ENCODE measurements at regions of chr17 and their contacts with region 1.

Region 1: GRCh38 chr17:77666881-77667395 is 291.6 kb upstream of the TNRC6C start:
- DNase-seq: peak; percentile 89
- H3K4me3 Mint-ChIP-seq: peak overlapping the region; percentile 83
- H3K27ac Mint-ChIP-seq: peak overlapping the region; percentile 97
- H3K4me1 Mint-ChIP-seq: peaks cover 41% of the 10 kb centered on the region
- H3K27me3 Mint-ChIP-seq: no peaks in the 10 kb centered on the region

Region 2: GRCh38 chr17:77609553-77610517 is 57.1 kb before region 1 on chr17:
- CTCF ChIA-PET with region 1: interaction called, 6 read pairs
- POLR2A ChIA-PET with region 1: no interaction called
- intact Hi-C with region 1: loop called (anchors 1 kb)
- DNase-seq: peak; percentile 79
- H3K4me3 Mint-ChIP-seq: peak overlapping the region; percentile 51
- H3K27ac Mint-ChIP-seq: peak overlapping the region; percentile 29
- H3K4me1 Mint-ChIP-seq: peaks cover 25% of the 10 kb centered on the region
- H3K27me3 Mint-ChIP-seq: no peaks in the 10 kb centered on the region

Region 3: DNA sequence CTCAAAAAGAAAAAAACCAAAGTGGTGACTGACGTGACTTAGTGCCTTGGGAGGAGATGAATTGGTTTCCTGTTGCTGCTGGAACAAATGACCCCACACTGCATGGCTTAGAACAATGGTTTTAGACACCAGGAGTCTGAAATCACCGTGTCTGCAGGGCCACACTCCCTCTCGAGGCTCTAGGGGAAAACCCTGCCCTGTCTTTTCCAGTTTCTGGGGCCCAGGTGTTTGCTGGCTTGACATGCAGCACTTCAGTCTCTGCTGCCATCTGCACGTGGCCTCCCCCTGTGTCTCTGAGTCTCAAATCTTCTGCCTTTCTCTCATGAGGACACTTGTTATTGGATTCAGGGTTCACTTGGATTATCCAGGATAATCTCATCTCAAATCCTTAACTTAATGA is 32.2 kb before region 1 on chr17:
- CTCF ChIA-PET with region 1: no interaction called
- POLR2A ChIA-PET with region 1: interaction called, 3 read pairs
- intact Hi-C with region 1: loop called (anchors 5 kb)
- DNase-seq: peak; percentile 79
- H3K4me3 Mint-ChIP-seq: no peak overlapping the region
- H3K27ac Mint-ChIP-seq: peak overlapping the region; percentile 46
- H3K4me1 Mint-ChIP-seq: peaks cover 17% of the 10 kb centered on the region
- H3K27me3 Mint-ChIP-seq: peaks cover 5% of the 10 kb centered on the region

Region 4: DNA sequence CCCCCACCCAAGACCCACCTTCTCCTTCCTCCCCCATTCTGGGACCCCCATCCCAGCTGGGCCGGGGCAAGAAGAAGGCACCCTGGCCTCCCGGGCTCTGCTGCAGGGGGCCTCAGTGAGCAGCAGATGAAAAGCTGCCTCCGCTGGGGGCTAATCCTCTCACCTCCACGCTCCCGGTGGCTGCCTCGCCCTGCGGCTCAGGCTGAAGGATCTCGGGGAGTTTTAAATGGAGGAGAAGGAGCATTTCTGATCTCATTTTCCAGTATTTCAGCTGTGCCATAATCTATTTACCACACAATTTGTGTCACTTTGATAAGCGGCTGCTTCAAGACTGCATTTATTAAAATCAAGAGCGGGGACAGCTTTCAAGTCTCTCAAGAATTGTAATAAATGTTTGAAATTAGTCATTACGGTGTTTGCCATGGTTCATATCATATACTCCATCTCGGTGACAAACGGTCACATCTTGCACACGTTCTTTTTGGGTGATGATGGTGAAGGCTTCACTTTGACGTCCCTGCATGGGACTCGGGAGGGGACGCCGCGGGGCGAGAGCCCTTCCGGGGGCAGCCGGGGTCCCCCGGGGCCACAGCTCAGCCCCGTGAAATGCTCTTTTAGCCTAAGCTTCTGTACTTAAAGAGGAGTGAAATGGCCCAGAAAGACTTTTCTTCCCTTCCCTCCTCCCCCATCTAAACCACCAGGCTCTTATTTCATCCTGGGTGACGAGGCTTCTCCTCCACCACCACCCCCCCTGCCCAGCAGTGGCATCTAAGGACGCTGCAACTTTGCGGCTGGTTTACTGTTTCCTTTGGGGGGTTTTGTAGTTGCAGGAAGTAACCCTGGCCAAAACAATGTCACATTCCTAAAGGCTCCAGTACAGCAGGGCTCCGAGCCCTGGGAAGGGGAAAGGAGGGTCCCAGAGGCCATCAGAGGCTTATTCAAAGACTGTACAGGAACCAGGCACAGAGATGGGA is 21.6 kb before region 1 on chr17:
- CTCF ChIA-PET with region 1: interaction called, 16 read pairs
- POLR2A ChIA-PET with region 1: interaction called, 16 read pairs
- intact Hi-C with region 1: loop called (anchors 1 kb)
- DNase-seq: peak; percentile 85
- H3K4me3 Mint-ChIP-seq: peak overlapping the region; percentile 68
- H3K27ac Mint-ChIP-seq: peak overlapping the region; percentile 84
- H3K4me1 Mint-ChIP-seq: peaks cover 26% of the 10 kb centered on the region
- H3K27me3 Mint-ChIP-seq: no peaks in the 10 kb centered on the region

Region 5: DNA sequence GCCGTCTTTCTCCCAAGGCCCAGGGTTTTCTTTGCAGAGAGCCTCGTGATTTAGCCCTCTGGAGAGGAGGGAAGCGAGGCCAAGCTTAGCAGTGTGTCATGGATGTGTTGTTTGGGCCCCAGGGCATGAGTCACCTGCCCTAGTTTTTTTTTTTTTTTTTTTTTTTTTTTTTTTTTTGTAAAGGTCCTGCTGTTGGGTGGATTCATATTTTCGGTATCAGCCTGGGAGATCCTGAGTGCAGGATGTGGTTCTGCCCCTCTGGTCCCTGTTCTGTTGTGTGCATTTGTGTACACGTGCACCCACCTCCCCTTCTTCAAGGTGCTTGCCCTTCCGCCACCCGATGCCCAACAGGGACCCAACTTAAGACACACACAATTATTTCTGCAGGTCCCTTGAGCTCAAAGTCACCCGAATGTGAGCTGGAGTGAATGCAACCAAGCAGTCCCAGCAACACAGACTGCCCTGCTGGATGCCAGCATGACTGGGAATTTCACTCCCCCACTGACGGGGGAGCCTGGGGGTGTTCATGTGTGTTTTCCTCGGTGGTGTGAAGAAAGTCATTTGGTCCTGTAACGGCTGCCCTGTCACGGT is 25.7 kb after region 1 on chr17:
- CTCF ChIA-PET with region 1: no interaction called
- POLR2A ChIA-PET with region 1: no interaction called
- intact Hi-C with region 1: loop called (anchors 1 kb)
- DNase-seq: peak; percentile 45
- H3K4me3 Mint-ChIP-seq: peak overlapping the region; percentile 26
- H3K27ac Mint-ChIP-seq: no peak overlapping the region
- H3K4me1 Mint-ChIP-seq: peaks cover 35% of the 10 kb centered on the region
- H3K27me3 Mint-ChIP-seq: peaks cover 13% of the 10 kb centered on the region

Region 6: DNA sequence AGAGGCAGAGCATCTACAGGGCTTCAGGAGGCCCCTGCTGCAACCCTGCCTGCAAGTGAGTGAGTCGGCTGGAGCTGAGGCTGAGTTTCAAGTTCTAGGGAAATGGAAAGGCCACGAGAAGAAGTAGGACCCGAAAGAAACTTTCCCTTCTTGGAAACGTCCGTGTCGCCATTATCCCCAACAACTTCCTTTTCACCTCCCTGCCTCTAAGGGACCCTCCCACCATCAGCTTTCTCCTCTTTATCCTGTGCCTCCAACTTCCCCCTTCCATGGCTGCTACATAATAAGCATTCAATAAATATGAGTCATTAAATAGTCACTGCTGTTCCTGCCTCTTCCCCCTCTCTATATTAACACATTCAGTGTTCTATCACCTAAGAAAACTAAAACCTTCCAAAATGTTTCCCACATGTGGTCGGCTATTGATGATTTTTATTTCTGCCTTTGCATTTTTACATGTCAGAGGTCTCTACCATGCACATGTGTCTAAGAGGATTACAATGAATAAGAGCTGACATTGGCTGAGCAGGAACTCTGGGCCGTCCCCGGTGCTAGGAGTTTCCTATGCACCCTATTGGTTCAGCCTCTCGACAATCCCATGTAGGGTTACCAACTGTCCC is 175.7 kb after region 1 on chr17:
- CTCF ChIA-PET with region 1: no interaction called
- POLR2A ChIA-PET with region 1: no interaction called
- intact Hi-C with region 1: loop called (anchors 2 kb)
- DNase-seq: peak; percentile 51
- H3K4me3 Mint-ChIP-seq: no peak overlapping the region
- H3K27ac Mint-ChIP-seq: peak overlapping the region; percentile 25
- H3K4me1 Mint-ChIP-seq: peaks cover 50% of the 10 kb centered on the region
- H3K27me3 Mint-ChIP-seq: peaks cover 2% of the 10 kb centered on the region